Activated CD4-positive, alpha-beta T cell treated with anti-CD3 and anti-CD28 coated beads, Interleukin-2, amount 10 ng/mL, durations not matched to agents 24 days and 14 days (primary cell): ENCODE measurements at regions of chr4 and their contacts with region 1.

Region 1: DNA sequence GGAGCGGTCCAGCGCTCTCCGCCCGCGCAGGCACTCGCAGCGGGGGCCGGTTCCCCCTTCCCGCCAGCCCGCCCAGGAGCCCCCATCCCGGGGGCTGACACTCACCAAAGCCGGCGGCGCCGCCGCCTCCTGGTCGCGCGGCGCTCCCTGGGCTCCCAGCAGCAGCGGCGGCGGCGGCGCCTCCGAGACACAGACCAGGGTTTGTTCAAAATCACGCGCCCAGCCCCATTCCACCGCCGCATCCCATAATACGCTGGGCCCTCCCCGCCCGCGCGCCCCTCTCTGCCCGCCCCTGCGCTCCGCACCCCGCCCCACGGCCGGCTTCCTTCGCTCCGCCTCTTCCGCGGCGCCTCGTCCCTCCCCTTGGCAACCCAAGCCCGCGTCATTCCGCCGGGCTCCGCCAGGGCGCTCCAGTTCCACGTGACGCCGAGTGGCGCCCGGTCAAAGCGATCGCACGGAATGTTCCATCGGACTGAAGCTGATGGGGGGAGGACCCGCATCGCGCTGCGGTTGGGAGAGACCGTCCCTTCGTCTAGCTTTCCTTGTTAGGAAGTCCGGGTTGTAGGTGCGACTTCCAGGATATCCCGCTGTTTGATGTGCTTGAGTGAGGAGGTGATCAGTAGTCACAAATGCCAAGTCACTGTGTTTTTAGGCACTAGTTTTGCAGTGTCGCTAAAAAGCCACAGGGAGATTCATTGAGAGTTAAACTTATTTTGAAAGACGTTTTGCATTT is 2.2 kb upstream of the LIN54 start:
- DNase-seq: peak; percentile 99
- H3K4me3 Mint-ChIP-seq: peak overlapping the region; percentile 92
- H3K27ac Mint-ChIP-seq: peak overlapping the region; percentile 89
- H3K4me1 Mint-ChIP-seq: peaks cover 40% of the 10 kb centered on the region
- H3K27me3 Mint-ChIP-seq: peaks cover 1% of the 10 kb centered on the region

Region 2: GRCh38 chr4:82373816-82374625 is 638.8 kb before region 1 on chr4 and contains the start of gene HNRNPD:
- intact Hi-C with region 1: loop called (anchors 1 kb)
- DNase-seq: peak; percentile 97
- H3K4me3 Mint-ChIP-seq: peak within 1 kb of the TSS; percentile 91
- H3K27ac Mint-ChIP-seq: peak within 1 kb of the TSS; percentile 98
- H3K4me1 Mint-ChIP-seq: peaks cover 38% of the 10 kb centered on the region
- H3K27me3 Mint-ChIP-seq: no peaks in the 10 kb centered on the region
- total RNA-seq, gene HNRNPD: 481 and 492 TPM in 2 replicates

Region 3: GRCh38 chr4:82528868-82529267 is 484.0 kb before region 1 on chr4:
- intact Hi-C with region 1: no loop called
- DNase-seq: no peak
- H3K4me3 Mint-ChIP-seq: no peak overlapping the region
- H3K27ac Mint-ChIP-seq: no peak overlapping the region
- H3K4me1 Mint-ChIP-seq: no peaks in the 10 kb centered on the region
- H3K27me3 Mint-ChIP-seq: peaks cover 8% of the 10 kb centered on the region

Region 4: GRCh38 chr4:82851885-82852750 is 160.7 kb before region 1 on chr4:
- intact Hi-C with region 1: loop called (anchors 5 kb)
- DNase-seq: peak; percentile 79
- H3K4me3 Mint-ChIP-seq: no peak overlapping the region
- H3K27ac Mint-ChIP-seq: peak overlapping the region; percentile 9
- H3K4me1 Mint-ChIP-seq: peaks cover 7% of the 10 kb centered on the region
- H3K27me3 Mint-ChIP-seq: no peaks in the 10 kb centered on the region

Region 5: DNA sequence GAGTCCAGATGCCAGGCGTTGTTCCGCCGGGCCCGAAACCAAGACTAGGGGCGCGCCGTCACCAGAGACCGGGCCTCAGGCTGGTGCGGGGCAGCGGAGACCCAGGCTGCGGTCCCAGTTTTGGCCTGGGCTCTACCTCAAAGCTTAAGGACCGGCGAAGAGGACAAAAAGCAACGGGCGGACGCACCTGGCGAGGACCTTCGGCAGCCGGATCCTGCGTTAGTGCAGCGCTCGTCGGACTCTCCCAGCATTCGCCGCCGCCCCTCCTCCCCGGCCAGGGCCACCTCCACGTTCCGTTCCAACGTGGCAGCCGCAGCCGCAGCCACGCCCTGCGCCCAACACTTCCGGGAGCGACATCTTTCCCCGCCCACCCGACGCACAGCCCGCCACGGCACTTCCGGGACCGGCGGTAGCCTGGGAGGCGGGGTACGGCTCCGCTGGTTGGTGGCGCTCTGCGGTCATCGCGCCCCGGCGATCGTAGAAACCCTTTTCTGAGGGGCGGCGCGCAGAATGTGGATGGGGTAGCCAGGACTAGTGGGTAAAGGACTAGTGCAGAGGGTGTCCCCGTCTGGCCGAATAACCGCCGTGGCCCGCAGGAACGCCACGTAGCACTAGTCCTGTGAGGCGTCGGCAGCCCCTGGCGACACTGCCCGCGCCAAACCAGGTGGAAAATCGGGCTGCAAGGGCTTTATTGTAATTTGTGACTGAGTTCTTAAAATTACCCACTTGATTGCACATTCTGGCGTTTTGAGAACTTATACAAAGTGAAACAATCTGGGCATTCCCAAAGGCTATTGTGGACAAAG is 121.7 kb before region 1 on chr4 and contains the start of gene SEC31A:
- intact Hi-C with region 1: loop called (anchors 1 kb)
- DNase-seq: peak; percentile 99
- H3K4me3 Mint-ChIP-seq: peak within 1 kb of the TSS; percentile 88
- H3K27ac Mint-ChIP-seq: peak within 1 kb of the TSS; percentile 90
- H3K4me1 Mint-ChIP-seq: peaks cover 41% of the 10 kb centered on the region
- H3K27me3 Mint-ChIP-seq: no peaks in the 10 kb centered on the region
- total RNA-seq, gene SEC31A: 122 and 125 TPM in 2 replicates

Region 6: GRCh38 chr4:82989575-82990429 is 23.1 kb before region 1 on chr4:
- intact Hi-C with region 1: loop called (anchors 2 kb)
- DNase-seq: peak; percentile 78
- H3K4me3 Mint-ChIP-seq: peak overlapping the region; percentile 66
- H3K27ac Mint-ChIP-seq: peak overlapping the region; percentile 89
- H3K4me1 Mint-ChIP-seq: peaks cover 29% of the 10 kb centered on the region
- H3K27me3 Mint-ChIP-seq: no peaks in the 10 kb centered on the region

Region 7: DNA sequence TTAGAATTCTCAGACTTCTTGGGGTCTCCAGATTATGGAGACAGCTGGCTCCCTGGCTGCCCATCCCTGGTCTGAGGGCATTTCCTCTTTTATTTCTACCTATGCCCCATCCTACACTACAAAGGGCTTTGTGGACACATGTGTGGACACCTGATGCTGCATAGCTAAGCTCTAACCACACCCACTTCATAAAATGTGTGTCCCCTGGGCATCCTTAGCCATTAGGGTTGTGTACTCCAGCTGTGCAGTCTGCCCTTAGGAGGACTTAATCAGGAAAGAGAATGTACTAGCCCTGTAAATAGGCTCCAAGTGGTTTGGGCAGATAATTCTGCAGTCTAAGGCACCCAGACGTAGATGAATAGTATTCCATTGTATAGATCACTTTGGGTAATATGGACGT is 224.7 kb after region 1 on chr4:
- intact Hi-C with region 1: loop called (anchors 5 kb)
- DNase-seq: no peak
- H3K4me3 Mint-ChIP-seq: no peak overlapping the region
- H3K27ac Mint-ChIP-seq: no peak overlapping the region
- H3K4me1 Mint-ChIP-seq: peaks cover 51% of the 10 kb centered on the region
- H3K27me3 Mint-ChIP-seq: peaks cover 33% of the 10 kb centered on the region

Region 8: GRCh38 chr4:83552924-83553323 is 540.1 kb after region 1 on chr4:
- intact Hi-C with region 1: no loop called
- DNase-seq: no peak
- H3K4me3 Mint-ChIP-seq: no peak overlapping the region
- H3K27ac Mint-ChIP-seq: no peak overlapping the region
- H3K4me1 Mint-ChIP-seq: peaks cover 24% of the 10 kb centered on the region
- H3K27me3 Mint-ChIP-seq: no peaks in the 10 kb centered on the region